ENCODE measurements at regions of chr2 and their contacts with region 1.

Region 1: DNA sequence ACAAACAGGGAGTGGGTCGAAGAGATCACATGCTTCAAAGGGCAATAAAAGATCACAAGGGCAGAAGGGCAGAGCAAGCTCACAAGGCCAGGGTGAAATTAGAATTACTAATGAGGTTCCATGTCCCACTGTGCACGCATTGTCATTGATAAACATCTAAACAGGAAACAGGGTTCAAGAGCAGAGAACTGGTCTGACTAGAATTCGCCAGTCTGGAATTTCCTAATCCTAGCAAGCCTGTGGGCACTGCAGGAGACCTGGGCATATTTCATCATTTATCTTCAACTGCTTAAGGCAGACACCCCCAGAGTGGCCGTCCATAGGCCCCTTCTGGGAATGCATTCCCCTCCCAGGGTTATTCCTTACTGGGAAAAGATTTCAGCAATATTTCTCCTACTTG is 408.2 kb downstream of the ZNF804A start:
- DNase-seq: no peak
- H3K4me3 ChIP-seq: no peak overlapping the region
- H3K4me3 Mint-ChIP-seq: no peak overlapping the region
- H3K27ac Mint-ChIP-seq: no peak overlapping the region
- H3K4me1 ChIP-seq: no peaks in the 10 kb centered on the region
- H3K4me1 Mint-ChIP-seq: no peaks in the 10 kb centered on the region
- H3K27me3 ChIP-seq: no peaks in the 10 kb centered on the region
- H3K27me3 Mint-ChIP-seq: no peaks in the 10 kb centered on the region
- CTCF ChIP-seq: no peak

Region 2: DNA sequence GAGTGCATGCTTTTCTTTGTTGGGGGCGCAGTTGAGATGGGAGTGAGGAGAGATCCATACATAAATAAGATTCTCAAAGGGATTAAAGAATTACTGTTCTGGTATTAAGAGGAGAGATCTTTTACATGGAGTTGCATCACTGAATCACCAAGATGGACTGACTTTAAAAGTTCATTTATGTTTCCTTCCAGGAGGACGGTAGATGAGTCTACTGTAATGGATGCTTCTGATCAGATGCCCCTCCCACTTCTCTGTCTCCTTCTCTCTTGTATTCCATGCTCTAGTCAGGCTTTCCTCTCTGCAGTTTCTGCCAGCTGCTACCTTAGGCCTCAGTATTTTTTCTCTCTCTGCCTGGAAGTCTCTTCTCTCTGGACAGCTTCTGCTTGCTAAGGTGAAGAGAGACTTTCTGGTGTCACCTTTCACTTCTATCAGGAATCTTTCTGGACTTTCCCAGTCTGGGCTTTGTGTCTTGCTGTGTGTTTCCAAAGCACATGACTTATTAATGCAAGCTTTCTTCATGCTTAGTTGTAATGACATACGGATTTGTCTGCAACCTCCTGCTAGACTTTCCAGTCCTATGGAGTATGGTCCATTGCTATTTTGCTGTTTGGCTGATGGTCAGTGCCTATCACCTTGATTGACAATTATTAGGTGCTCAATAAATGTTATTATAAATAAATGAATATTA is 1711.0 kb after region 1 on chr2:
- CTCF ChIA-PET with region 1: no interaction called
- POLR2A ChIA-PET with region 1: no interaction called
- intact Hi-C with region 1: loop called (anchors 10 kb)
- DNase-seq: no peak
- H3K4me3 ChIP-seq: no peak overlapping the region
- H3K4me3 Mint-ChIP-seq: no peak overlapping the region
- H3K27ac Mint-ChIP-seq: no peak overlapping the region
- H3K4me1 ChIP-seq: no peaks in the 10 kb centered on the region
- H3K4me1 Mint-ChIP-seq: no peaks in the 10 kb centered on the region
- H3K27me3 ChIP-seq: no peaks in the 10 kb centered on the region
- H3K27me3 Mint-ChIP-seq: no peaks in the 10 kb centered on the region
- CTCF ChIP-seq: no peak